ENCODE measurements at regions of chr2 and their contacts with region 1.

Region 1: DNA sequence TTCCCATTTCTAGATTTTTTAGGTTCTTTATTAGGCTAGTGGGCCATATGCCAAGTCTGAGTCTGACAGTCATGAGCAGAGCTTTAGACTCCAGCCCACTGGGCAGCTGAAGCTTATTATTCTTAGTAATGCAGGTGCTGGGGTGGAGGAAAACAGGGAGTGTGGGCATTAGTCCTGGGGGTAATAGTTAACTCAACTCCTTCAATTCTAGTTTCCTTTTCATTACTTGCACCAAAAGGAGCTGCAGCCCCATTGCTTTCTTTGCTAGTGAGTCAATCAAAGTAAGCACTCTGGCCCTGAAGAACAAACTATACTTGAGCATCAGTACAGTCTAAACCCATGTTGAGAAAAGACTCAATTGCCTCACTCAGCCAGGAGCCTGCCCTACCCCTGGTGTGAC is 35.5 kb downstream of the ICOS start:
- DNase-seq: no peak
- ATAC-seq: no peak
- H3K4me3 ChIP-seq: no peak overlapping the region
- H3K4me3 Mint-ChIP-seq: no peak overlapping the region
- H3K27ac ChIP-seq: no peak overlapping the region
- H3K27ac Mint-ChIP-seq: no peak overlapping the region
- H3K4me1 ChIP-seq: no peaks in the 10 kb centered on the region
- H3K4me1 Mint-ChIP-seq: no peaks in the 10 kb centered on the region
- H3K27me3 ChIP-seq: no peaks in the 10 kb centered on the region
- H3K27me3 Mint-ChIP-seq: no peaks in the 10 kb centered on the region
- CTCF ChIP-seq: no peak

Region 2: DNA sequence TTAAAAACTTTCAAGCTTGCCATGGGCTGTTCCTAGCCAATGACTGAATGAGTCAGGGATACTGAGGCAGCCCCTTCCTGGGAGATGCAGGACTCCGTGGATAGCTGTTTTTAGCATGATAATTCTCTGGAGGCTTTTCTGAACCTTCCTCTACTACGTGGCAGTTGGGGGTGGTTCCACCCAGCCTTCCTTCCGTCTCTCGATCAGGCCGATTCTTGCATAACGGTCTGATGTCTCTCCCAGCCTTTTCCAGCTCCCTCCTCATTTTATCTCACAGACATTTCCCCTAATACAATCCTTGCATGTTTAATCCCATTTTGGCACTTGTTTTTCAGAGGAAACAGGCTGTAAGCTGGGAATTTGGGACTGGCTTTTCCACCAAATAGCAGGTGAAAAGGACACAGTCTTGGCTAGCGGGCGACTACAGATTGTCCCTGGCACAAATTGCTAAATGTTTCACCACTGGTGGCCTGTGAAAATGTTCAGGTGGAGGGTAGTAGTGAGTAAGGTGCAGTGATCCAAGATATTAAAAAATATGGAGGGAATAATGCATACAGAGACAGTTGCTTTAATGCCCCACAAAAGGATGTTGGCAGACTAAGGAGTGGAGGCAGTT is 125.5 kb before region 1 on chr2:
- CTCF ChIA-PET with region 1: no interaction called
- POLR2A ChIA-PET with region 1: no interaction called
- intact Hi-C with region 1: loop called in 1 of 2 experiments (anchors 5 kb)
- DNase-seq: no peak
- ATAC-seq: no peak
- H3K4me3 ChIP-seq: no peak overlapping the region
- H3K4me3 Mint-ChIP-seq: no peak overlapping the region
- H3K27ac ChIP-seq: no peak overlapping the region
- H3K27ac Mint-ChIP-seq: no peak overlapping the region
- H3K4me1 ChIP-seq: no peaks in the 10 kb centered on the region
- H3K4me1 Mint-ChIP-seq: no peaks in the 10 kb centered on the region
- H3K27me3 ChIP-seq: no peaks in the 10 kb centered on the region
- H3K27me3 Mint-ChIP-seq: no peaks in the 10 kb centered on the region
- CTCF ChIP-seq: no peak